HCT116 (cell line): ENCODE measurements at regions of chr5 and their contacts with region 1.

Region 1: GRCh38 chr5:10863763-10864383 is 102.8 kb upstream of the DAP start:
- DNase-seq: peak; percentile 45
- ATAC-seq: peak; percentile 98
- H3K4me3 ChIP-seq: no peak overlapping the region
- H3K27ac ChIP-seq: no peak overlapping the region
- H3K4me1 ChIP-seq: no peaks in the 10 kb centered on the region
- H3K27me3 ChIP-seq: peaks cover 34% of the 10 kb centered on the region
- CTCF ChIP-seq: peak; percentile 31 to 95 (median 92); a peak in 5 of 6 replicates
- POLR2A ChIP-seq: no peak
- RAD21 ChIP-seq: peak; percentile 55

Region 2: GRCh38 chr5:11182441-11183268 is 318.8 kb after region 1 on chr5:
- CTCF ChIA-PET with region 1: no interaction called
- POLR2A ChIA-PET with region 1: no interaction called
- RAD21 ChIA-PET with region 1: no interaction called
- intact Hi-C with region 1: loop called (anchors 10 kb)
- DNase-seq: peak; percentile 18
- ATAC-seq: peak; percentile 47; the same call in 1 of the 2 replicates
- H3K4me3 ChIP-seq: no peak overlapping the region
- H3K27ac ChIP-seq: no peak overlapping the region
- H3K4me1 ChIP-seq: no peaks in the 10 kb centered on the region
- H3K27me3 ChIP-seq: 0 out of 2 replicates have a peak, but pooled peaks cover 4% of the 10 kb centered on the region
- CTCF ChIP-seq: peak; percentile 26 to 64 (median 57); a peak in 5 of 6 replicates
- POLR2A ChIP-seq: no peak
- RAD21 ChIP-seq: peak; percentile 47

Region 3: GRCh38 chr5:12023614-12024241 is 1159.9 kb after region 1 on chr5:
- CTCF ChIA-PET with region 1: no interaction called
- POLR2A ChIA-PET with region 1: no interaction called
- RAD21 ChIA-PET with region 1: no interaction called
- intact Hi-C with region 1: loop called (anchors 5 kb)
- DNase-seq: no peak
- ATAC-seq: no peak
- H3K4me3 ChIP-seq: no peak overlapping the region
- H3K27ac ChIP-seq: no peak overlapping the region
- H3K4me1 ChIP-seq: no peaks in the 10 kb centered on the region
- H3K27me3 ChIP-seq: no peaks in the 10 kb centered on the region
- CTCF ChIP-seq: peak; percentile 7 to 64 (median 45); a peak in 4 of 6 replicates
- POLR2A ChIP-seq: no peak
- RAD21 ChIP-seq: peak; percentile 23; the same call in 1 of the 2 replicates